ENCODE measurements at regions of chr17 and their contacts with region 1.

Region 1: DNA sequence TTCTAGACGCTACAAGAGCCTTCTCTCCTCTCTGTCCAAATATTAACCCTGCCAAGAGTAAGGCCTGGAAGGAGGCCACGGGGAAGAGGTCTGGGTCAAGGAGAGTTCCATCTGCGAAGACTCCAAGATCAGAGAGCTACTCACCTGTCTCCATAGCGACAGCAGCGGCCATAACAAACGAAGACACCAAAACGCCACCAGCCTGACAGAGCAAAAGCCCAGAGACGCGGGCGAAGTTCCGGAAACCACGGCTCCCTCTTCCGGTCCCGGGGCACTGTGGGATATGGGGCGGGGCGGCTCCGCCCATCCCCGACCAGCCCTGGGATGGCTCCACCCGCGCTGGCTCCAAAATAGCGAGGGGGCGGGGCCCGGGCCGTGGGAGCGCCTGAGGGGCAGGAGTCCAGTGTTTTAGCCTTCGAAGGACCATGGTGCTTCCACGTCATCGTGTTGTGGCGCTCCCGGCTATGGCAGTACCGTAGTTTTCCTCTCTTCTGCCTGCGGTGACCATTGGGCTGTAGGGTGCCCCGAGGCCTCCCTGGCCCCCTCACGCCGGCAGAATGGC is at the starts of genes C17orf100 and MED31:
- DNase-seq: peak; percentile 89 to 99 (median 95)

Region 2: DNA sequence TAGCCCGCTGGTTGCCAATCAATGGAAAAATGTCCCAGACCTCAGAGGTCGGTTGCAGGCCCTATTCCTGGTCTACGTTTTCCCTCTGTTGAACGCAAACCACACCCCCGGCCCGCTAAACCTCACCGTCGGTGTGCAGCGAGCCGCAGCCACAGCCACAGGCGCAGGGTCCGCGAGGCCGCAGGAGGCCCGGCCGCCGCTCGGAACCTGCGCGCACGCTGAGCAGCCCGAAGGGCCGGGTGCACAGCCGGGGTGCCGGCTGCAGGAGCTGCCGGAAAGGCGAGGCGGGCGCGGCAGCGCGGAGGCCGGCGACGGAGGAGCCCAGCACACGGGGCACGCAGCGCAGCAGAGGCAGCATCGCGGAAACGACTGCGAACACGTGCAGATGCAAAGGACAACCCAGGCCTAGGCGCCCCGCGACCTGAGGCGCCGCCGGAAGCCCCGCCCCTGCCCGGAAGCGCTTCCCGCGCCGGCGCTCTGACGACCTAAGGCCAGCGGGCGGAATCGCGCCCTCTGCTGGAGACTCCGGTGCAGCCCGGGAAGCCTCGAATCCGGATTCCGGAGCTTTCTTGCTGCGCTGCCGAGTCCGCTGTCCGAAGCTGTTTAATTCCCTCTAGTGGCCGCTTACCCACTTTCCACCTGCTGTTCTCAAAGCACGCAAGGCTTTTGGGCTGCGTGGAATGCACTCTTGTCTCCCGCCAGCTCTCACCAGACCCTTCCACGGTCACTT is 1212.6 kb before region 1 on chr17 and contains the start of gene C1QBP:
- intact Hi-C with region 1: loop called (anchors 5 kb)
- DNase-seq: peak; percentile 84 to 99 (median 90)

Region 3: GRCh38 chr17:6640536-6641373 is 10.7 kb before region 1 on chr17 and contains the starts of genes KIAA0753 and TXNDC17:
- intact Hi-C with region 1: loop called (anchors 1 kb)
- DNase-seq: peak; percentile 84 to 98 (median 90)

Measured in posterior cingulate gyrus (tissue), 11 donors.